ENCODE measurements at regions of chr4 and their contacts with region 1.

Region 1: DNA sequence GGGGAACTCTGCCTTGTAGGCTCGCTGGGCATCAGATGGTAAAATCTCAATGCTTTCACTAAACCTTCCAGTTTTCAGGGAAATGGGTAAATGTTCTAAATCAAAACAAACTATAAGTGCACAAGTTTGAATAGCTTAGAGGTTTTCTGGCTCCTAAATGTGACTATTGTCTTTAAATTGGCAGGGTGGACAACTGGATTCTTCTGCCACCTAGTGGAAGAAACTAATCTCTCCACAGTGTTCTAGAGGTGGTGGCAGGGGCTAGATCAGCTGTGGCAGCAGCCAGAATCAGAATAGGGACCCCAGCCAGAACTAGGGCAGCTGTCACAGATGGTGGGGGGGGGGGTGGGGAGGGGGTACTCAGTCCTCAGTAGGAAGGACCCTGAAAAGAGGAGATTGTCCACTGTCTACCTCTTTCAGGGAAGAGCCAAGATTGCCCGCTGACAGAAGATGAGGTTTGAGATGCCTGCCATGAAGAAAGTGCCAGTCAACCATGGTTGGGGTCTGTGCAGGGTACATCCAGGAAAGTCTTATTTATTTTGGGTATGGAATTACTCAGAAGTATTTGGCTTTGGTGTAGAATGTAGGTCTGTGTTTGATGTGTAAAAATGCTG is 201.4 kb downstream of the CCNG2 start:
- DNase-seq: no peak
- ATAC-seq: peak; percentile 74

Region 2: GRCh38 chr4:77240469-77241066 is 117.9 kb before region 1 on chr4:
- intact Hi-C with region 1: loop called in 1 of 2 experiments (anchors 5 kb)
- DNase-seq: peak; percentile 41 to 77
- ATAC-seq: peak; percentile 79

Region 3: DNA sequence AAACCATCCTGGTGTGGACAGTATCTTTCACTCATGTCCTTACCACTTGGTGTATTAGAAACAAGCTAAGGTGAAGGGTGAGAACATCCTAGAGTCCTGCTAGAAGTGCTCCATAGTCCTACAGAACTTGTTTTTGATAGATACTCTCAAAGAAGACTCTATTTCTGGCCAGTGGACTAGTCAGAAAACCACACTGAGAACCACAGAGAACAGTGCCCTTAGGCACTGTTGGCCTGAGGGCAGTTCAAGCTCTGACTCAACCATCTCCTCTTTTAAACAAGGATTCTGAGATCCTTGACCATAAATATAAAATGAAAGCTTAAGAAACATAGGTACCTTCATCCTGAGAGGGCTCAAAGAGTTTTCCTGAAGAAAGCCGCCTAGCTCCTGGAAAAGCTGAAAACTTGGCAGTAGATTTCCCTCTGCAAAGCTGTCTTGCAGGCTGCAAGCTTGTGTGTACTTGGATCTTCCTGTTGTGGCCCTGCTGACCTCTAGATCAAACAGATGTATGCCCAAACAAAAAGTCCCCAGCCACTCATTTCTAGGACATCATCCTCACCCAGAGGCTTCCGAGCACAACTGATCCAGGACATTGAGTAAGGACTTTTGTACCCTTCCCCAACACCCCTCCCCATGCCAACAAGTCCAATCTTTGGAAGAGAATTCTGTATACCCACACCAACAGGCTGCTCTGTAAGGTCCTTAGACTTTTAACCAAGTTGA is 135.6 kb after region 1 on chr4:
- intact Hi-C with region 1: no loop called
- DNase-seq: no peak
- ATAC-seq: no peak

Measured in left colon (tissue), 2 donors.